Heart right ventricle (tissue), 16 donors: ENCODE measurements at regions of chr20 and their contacts with region 1.

Region 1: DNA sequence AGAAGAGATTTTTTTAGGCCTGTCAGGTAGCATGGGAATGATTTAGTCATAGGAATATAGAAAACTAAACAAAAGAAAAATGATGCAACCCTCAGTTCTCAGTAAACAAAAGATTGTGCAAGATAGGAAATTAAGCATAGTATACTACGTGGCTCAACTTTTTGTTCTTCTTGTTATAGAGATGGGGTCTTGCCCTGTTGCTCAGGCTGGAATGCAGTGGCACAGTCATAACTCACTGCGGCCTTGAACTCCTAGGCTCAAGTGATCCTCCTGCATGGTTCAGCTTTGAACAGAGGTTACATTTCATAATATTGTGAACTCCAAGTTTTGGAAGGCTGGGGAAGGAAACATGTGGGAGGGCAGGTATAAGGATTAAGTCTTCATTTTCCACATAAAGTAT is 28.5 kb downstream of the SLX4IP start:
- DNase-seq: no peak
- ATAC-seq: no peak
- H3K4me3 ChIP-seq: no peak overlapping the region
- H3K27ac ChIP-seq: no peak overlapping the region
- H3K4me1 ChIP-seq: peaks cover 0 to 42% (median 29%) of the 10 kb centered on the region in 9 donors
- H3K27me3 ChIP-seq: no peaks in the 10 kb centered on the region
- CTCF ChIP-seq: no peak

Region 2: DNA sequence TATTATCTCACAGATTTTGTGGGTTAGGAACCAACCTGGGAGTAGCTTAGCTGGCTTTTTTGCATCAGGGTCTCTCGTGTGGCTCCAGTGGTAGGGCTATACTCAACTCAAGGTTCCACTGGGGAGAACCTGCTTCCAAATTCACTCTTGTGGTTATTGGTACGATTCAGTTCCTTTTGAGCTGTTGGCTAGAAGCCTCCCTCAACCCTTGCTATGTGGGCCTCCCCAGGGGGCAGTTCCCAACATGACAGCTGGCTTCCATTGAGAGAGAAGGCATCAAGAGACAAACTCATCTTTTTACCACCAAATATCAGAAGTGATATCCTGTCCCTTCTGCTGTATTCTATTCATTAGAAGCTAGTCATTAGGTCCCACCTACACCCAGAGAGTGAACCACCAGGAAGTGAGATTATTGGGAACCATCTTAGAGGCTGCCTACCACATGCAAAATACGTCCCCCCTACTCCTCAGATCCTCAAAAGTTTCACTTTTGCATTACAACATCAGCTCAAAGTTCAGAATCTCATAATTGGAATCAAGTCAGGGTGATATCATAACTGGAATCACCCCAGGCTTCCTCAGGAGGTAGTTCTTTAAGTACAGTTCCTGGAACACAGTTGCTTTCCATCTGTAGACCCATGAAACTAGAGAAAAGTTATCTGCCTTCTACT is 60.5 kb before region 1 on chr20:
- intact Hi-C with region 1: no loop called
- DNase-seq: no peak
- ATAC-seq: no peak
- H3K4me3 ChIP-seq: no peak overlapping the region
- H3K27ac ChIP-seq: no peak overlapping the region
- H3K4me1 ChIP-seq: peaks cover 0 to 7% (median 0%) of the 10 kb centered on the region in 9 donors
- H3K27me3 ChIP-seq: no peaks in the 10 kb centered on the region
- CTCF ChIP-seq: no peak

Region 3: DNA sequence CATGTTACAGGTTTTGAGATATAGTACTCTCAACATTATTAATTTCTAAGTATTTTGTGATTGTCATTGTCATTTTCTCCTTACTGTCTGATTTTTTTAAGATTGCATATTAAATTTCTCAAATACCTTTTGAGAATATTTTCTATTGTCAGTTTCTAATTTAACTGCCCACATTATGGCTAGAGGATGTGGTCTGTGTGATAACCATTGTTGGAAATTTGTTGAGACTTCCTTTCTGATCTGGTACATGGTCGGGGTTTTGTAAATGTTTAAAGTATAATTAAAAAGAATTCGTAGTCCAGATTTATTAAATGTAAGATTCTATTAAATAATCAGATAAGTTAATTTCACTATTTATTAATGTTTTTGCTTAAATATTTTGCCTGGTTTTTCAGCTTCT is 31.6 kb after region 1 on chr20:
- intact Hi-C with region 1: loop called in 1 of 10 experiments (anchors 2 kb)
- DNase-seq: no peak
- ATAC-seq: no peak
- H3K4me3 ChIP-seq: no peak overlapping the region
- H3K27ac ChIP-seq: no peak overlapping the region
- H3K4me1 ChIP-seq: peaks cover 0 to 28% (median 0%) of the 10 kb centered on the region in 9 donors
- H3K27me3 ChIP-seq: no peaks in the 10 kb centered on the region
- CTCF ChIP-seq: no peak